ENCODE measurements at regions of chr5 and their contacts with region 1.

Region 1: GRCh38 chr5:110738812-110739651 is at the start of gene SLC25A46:
- DNase-seq: peak; percentile 90
- ATAC-seq: peak; percentile 97 to 99
- total RNA-seq, gene SLC25A46: 39.2 to 43.3 TPM

Region 2: GRCh38 chr5:110865400-110866094 is 126.5 kb after region 1 on chr5:
- intact Hi-C with region 1: no loop called
- DNase-seq: no peak
- ATAC-seq: no peak

Region 3: GRCh38 chr5:112160652-112161391 is 1421.8 kb after region 1 on chr5:
- intact Hi-C with region 1: loop called in 1 of 2 experiments (anchors 10 kb)
- DNase-seq: peak; percentile 92
- ATAC-seq: peak; percentile 92 to 94